ENCODE measurements at regions of chr6 and their contacts with region 1.

Region 1: DNA sequence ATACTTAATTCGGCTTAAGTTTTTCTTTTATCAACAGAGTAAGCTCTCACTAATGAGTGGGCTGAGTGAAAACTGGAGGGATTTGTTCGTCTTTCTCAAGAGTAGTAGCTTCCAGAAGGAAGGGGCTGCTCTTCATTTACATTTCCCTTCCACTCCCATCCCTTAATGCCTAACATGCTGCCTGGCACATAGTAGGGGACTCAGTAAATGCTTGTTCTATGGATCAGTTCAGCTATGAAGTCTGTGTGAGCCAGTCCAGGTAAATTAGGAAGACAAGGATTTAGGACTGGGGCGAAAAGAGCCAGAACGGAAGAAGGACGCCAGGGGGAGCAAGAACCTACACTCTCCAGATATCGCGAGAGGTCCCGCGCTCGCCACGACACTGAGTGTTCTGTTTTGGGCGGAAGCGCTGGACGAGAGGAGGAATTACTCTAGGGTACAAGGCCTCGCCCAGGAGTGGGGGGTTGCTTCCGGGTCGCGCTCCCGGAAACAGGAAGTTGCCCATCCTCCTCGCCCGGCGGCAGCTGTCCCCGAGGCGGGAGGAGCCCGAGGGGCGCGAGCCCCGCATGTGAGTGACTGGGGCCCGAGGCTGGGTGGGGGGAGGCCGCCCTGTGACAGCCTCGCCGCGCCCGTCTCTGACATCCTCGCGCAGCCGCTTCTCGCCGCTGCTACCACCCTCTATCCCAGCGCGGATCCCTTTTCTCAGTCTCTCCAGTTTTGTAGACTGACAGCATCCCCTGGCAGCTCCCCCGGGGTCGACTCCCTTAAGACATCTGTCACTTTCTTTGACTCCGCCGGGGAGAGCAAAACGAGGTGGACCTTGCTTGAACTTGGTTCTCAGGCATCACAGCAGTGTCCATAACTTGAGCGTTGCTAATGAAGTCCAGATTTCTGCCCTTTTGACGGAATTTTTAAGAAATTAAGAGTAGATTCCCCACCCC is at the start of gene C6orf89:
- DNase-seq: peak; percentile 93 to 100 (median 94)
- ATAC-seq: peak; percentile 93
- H3K4me3 ChIP-seq: peak within 1 kb of the TSS; percentile 64
- H3K27ac ChIP-seq: peak within 1 kb of the TSS; percentile 90
- H3K4me1 ChIP-seq: peaks cover 17 to 37% of the 10 kb centered on the region in 2 experiments; a peak in 4 of 5 replicates
- H3K27me3 ChIP-seq: no peaks in the 10 kb centered on the region
- CTCF ChIP-seq: peak; percentile 81 to 97 (median 95)
- EP300 ChIP-seq: no peak; the same call in 1 of the 2 replicates
- POLR2A ChIP-seq: peak; percentile 91
- RAD21 ChIP-seq: peak; percentile 66 to 69
- polyA plus RNA-seq, gene C6orf89: 35.2 to 41.9 TPM

Region 2: DNA sequence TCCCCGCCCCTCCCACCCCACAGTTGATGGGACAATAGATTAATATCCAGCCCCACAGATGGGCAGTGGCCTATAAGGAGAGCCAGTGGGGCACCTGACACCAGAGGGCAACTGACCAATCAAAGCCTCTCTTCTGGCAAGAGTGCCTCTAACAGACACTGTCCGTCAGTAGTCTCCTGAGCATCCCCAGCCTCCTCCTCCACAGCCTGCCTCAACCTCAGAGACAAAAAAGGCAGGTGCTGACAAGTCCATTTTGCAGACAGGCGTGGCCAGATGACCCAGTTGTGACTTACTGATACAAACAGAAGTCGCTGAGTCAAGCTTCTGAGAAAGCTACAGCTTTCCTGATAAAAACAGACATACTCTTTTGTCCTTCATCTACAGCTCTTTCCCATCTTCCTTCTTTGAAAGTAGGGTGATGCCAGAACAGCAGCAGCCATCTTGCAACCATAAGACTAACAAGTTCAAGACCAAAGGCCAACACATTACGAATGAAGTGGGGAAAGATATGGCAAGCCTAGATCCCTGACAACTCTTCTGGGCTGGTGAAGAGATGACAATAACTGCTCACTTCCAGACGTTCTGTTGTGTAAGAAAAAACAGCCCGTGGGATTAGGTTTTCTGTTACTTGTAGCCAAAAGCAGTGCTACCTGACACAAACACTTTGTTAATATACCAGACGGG is 23.4 kb before region 1 on chr6:
- CTCF ChIA-PET with region 1: no interaction called
- POLR2A ChIA-PET with region 1: interaction called, 10 read pairs
- in situ Hi-C with region 1: no loop called
- intact Hi-C with region 1: no loop called
- DNase-seq: peak; percentile 82 to 97 (median 88)
- ATAC-seq: peak; percentile 96
- H3K4me3 ChIP-seq: no peak overlapping the region
- H3K27ac ChIP-seq: peak overlapping the region; percentile 84
- H3K4me1 ChIP-seq: peaks cover 30 to 42% of the 10 kb centered on the region in 2 experiments
- H3K27me3 ChIP-seq: no peaks in the 10 kb centered on the region
- CTCF ChIP-seq: no peak
- EP300 ChIP-seq: peak; percentile 96
- POLR2A ChIP-seq: peak; percentile 46; the same call in 1 of the 2 replicates
- RAD21 ChIP-seq: no peak; a peak in 1 of 4 replicates

Region 3: GRCh38 chr6:36897609-36898008 is 11.9 kb after region 1 on chr6:
- CTCF ChIA-PET with region 1: no interaction called
- POLR2A ChIA-PET with region 1: interaction called, 12 read pairs
- in situ Hi-C with region 1: no loop called
- intact Hi-C with region 1: no loop called
- DNase-seq: peak in 2 of 4 experiments; percentile 39 to 41
- ATAC-seq: peak; percentile 85
- H3K4me3 ChIP-seq: no peak overlapping the region
- H3K27ac ChIP-seq: no peak overlapping the region
- H3K4me1 ChIP-seq: no peaks in the 10 kb centered on the region
- H3K27me3 ChIP-seq: no peaks in the 10 kb centered on the region
- CTCF ChIP-seq: peak; percentile 35 to 48 (median 36); a peak in 3 of 6 replicates
- EP300 ChIP-seq: no peak
- POLR2A ChIP-seq: no peak
- RAD21 ChIP-seq: peak in 1 of 2 experiments; percentile 21; a peak in 1 of 4 replicates

Region 4: GRCh38 chr6:37092923-37093920 is 207.5 kb after region 1 on chr6:
- CTCF ChIA-PET with region 1: no interaction called
- POLR2A ChIA-PET with region 1: no interaction called
- in situ Hi-C with region 1: no loop called
- intact Hi-C with region 1: no loop called
- DNase-seq: no peak
- ATAC-seq: peak; percentile 32
- H3K4me3 ChIP-seq: no peak overlapping the region
- H3K27ac ChIP-seq: no peak overlapping the region
- H3K4me1 ChIP-seq: peaks cover 12 to 16% of the 10 kb centered on the region in 2 experiments; a peak in 4 of 5 replicates
- H3K27me3 ChIP-seq: no peaks in the 10 kb centered on the region
- CTCF ChIP-seq: no peak
- EP300 ChIP-seq: no peak
- POLR2A ChIP-seq: no peak
- RAD21 ChIP-seq: no peak

Region 5: DNA sequence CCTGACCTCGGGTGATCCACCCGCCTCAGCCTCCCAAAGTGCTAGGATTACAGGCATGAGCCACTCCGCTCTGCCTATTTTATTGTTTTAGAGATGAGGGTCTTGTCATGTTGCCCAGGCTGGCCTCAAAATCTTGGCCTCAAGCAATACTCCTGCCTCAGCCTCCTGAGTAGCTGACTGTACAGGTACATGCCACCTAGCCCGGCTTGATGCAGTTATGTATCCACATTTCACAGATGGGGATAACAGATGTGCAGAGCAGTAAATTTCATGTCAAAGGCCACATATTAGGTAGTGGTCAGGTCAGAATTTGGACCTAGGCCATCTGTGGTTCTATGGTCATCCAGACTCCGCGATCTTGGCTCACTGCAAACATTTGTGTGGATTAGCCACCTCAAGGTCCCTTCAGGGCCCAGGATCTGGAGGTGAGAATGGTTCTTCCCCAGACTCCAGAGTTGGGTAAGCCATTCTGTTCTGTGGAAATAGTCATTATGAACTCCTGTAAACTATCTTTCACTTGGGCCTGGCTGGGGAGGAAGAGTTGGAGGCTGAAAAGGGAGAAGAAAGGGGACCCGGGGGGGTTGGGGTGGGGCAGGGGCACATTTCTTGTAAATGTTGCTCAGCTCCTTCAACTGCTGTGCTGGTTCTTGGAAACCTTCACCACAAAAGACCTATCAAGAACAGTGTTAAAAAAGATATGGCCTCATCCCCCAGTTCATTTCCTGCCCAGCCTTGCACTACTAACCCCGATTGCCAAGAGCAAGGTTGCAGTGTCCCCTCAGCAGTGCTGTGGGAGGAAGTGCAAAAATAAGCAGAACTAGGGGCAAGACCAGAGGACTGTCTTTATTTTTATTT is 297.2 kb after region 1 on chr6:
- CTCF ChIA-PET with region 1: no interaction called
- POLR2A ChIA-PET with region 1: no interaction called
- in situ Hi-C with region 1: no loop called
- intact Hi-C with region 1: loop called (anchors 5 kb)
- DNase-seq: peak; percentile 65 to 99 (median 78)
- ATAC-seq: peak; percentile 90
- H3K4me3 ChIP-seq: no peak overlapping the region
- H3K27ac ChIP-seq: peak overlapping the region; percentile 97
- H3K4me1 ChIP-seq: peaks cover 58 to 65% of the 10 kb centered on the region in 2 experiments
- H3K27me3 ChIP-seq: no peaks in the 10 kb centered on the region
- CTCF ChIP-seq: no peak
- EP300 ChIP-seq: peak; percentile 100
- POLR2A ChIP-seq: peak; percentile 60
- RAD21 ChIP-seq: peak; percentile 29 to 43; a peak in 3 of 4 replicates